Endothelial cell of umbilical vein (primary cell): ENCODE measurements at regions of chr19 and their contacts with region 1.

Region 1: GRCh38 chr19:41449079-41449864 is 6.3 kb downstream of the ERICH4 start:
- DNase-seq: peak; percentile 84
- H3K4me3 ChIP-seq: peak overlapping the region in 2 of 3 experiments; percentile 10 to 30
- H3K27ac ChIP-seq: no peak overlapping the region
- H3K4me1 ChIP-seq: no peaks in the 10 kb centered on the region
- H3K27me3 ChIP-seq: peaks cover 7% of the 10 kb centered on the region in 2 experiments
- CTCF ChIP-seq: peak; percentile 85 to 95
- POLR2A ChIP-seq: no peak

Region 2: GRCh38 chr19:41321600-41322270 is 127.5 kb before region 1 on chr19:
- CTCF ChIA-PET with region 1: no interaction called
- POLR2A ChIA-PET with region 1: no interaction called
- dilution Hi-C with region 1: no loop called
- intact Hi-C with region 1: no loop called
- DNase-seq: peak; percentile 76
- H3K4me3 ChIP-seq: no peak overlapping the region
- H3K27ac ChIP-seq: peak overlapping the region; percentile 100
- H3K4me1 ChIP-seq: peaks cover 46% of the 10 kb centered on the region
- H3K27me3 ChIP-seq: no peaks in the 10 kb centered on the region
- CTCF ChIP-seq: peak; percentile 83 to 89
- POLR2A ChIP-seq: peak; percentile 38

Region 3: DNA sequence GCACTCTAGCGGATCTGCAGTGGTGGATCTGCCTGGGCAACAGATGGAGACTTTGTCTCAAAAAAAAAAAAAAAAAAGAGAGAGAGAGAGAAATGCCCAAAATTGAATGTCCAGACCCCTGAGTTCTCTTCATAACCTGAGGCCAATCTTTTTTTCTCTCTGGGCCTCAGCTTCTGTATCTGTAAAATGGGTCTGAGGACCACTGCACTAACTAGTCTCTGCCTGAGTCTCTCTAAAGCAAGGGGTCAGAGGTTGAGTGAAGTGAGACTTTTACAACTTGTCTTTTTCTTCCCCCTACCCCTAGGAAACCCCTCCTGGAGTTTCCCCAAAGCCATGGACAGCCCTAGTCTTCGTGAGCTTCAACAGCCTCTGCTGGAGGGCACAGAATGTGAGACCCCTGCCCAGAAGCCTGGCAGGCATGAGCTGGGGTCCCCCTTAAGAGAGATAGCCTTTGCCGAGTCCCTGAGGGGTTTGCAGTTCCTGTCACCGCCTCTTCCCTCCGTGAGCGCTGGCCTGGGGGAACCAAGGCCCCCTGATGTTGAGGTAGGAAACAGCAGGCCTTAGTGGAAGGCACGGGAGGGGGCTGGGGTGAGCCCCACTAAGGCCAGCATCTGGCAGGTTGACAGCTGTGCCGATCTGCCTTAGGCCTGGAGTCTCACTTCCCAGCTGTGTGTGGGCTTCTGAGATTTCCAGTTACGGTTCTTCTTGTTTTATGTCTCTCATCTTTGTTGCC is 71.1 kb before region 1 on chr19:
- CTCF ChIA-PET with region 1: no interaction called
- POLR2A ChIA-PET with region 1: no interaction called
- dilution Hi-C with region 1: no loop called
- intact Hi-C with region 1: no loop called
- DNase-seq: no peak
- H3K4me3 ChIP-seq: no peak overlapping the region
- H3K27ac ChIP-seq: no peak overlapping the region
- H3K4me1 ChIP-seq: peaks cover 8% of the 10 kb centered on the region
- H3K27me3 ChIP-seq: no peaks in the 10 kb centered on the region
- CTCF ChIP-seq: peak in 1 of 2 donors; percentile 2
- POLR2A ChIP-seq: no peak

Region 4: DNA sequence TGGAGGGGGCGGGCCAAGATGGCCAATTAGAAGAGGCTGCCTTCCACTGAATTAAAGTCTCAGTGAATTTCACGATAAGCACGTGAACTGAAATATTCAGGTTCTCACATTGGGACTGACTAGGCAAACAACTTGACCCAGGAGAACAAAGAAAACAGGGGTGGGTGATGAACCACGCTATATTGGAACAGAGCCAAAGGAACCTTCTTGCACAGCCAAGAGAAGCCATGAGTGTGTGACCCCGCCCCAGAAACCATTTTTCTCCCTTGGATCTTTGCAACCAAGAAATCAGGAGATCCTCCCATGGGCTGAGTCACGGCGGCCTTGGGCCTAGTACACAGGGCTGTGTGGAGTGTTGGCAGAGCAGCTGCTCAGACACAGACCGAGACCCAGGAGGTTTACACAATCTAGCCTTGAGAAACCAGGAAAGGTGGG is 30.5 kb after region 1 on chr19:
- CTCF ChIA-PET with region 1: interaction called, 42 read pairs
- POLR2A ChIA-PET with region 1: interaction called, 4 read pairs
- dilution Hi-C with region 1: no loop called
- intact Hi-C with region 1: loop called (anchors 1 kb)
- DNase-seq: peak; percentile 98
- H3K4me3 ChIP-seq: peak overlapping the region in 2 of 3 experiments; percentile 56 to 98
- H3K27ac ChIP-seq: peak overlapping the region; percentile 97
- H3K4me1 ChIP-seq: peaks cover 37% of the 10 kb centered on the region
- H3K27me3 ChIP-seq: peaks cover under 1 to 3% of the 10 kb centered on the region in 2 experiments
- CTCF ChIP-seq: no peak
- POLR2A ChIP-seq: peak; percentile 96

Region 5: DNA sequence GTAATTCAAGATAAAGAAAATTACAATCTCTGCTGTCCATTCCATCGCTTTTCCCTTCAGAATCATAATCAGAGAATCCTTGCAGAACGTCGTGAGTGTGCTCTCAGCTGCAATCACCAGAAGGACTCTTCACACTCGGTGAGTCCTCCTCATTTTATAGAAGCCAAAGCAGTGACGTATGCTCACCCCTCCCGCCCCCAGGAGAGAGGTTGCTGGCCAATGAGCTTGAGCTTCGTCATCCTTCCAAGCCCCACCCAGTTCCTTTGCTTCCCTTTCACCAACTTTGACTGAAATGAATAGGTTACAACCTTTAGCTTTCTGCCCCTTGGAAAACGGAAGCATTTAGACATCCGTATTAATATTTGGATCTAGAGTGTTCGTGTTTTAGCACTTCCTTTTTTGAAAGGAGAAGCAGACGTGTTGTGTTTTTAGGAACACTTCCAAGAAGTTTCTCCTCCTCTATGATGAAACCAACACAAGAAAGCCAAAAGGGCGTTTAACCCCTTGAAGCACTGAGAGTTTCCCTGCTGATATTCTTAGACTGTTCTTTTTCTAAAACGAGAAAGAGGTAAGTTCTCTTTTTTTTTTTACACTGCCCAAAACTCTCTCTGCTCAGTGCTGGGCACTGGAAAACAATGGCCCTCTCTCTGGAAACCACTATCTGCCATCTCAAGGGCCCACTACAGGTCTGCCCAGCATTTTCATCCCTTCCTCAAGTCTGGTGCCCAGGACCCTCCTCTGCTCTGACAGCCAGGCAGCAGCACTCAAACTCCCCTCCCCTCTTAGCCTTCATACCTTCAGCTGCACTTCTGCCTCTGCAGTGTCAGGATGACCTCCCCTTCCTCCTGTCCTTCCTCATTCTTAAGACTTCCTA is 82.4 kb after region 1 on chr19:
- CTCF ChIA-PET with region 1: interaction called, 140 read pairs
- POLR2A ChIA-PET with region 1: interaction called, 8 read pairs
- dilution Hi-C with region 1: no loop called
- intact Hi-C with region 1: no loop called
- DNase-seq: peak; percentile 98
- H3K4me3 ChIP-seq: no peak overlapping the region
- H3K27ac ChIP-seq: peak overlapping the region; percentile 85
- H3K4me1 ChIP-seq: peaks cover 31% of the 10 kb centered on the region
- H3K27me3 ChIP-seq: peaks cover 17 to 24% of the 10 kb centered on the region in 2 experiments
- CTCF ChIP-seq: no peak
- POLR2A ChIP-seq: peak; percentile 85

Region 6: DNA sequence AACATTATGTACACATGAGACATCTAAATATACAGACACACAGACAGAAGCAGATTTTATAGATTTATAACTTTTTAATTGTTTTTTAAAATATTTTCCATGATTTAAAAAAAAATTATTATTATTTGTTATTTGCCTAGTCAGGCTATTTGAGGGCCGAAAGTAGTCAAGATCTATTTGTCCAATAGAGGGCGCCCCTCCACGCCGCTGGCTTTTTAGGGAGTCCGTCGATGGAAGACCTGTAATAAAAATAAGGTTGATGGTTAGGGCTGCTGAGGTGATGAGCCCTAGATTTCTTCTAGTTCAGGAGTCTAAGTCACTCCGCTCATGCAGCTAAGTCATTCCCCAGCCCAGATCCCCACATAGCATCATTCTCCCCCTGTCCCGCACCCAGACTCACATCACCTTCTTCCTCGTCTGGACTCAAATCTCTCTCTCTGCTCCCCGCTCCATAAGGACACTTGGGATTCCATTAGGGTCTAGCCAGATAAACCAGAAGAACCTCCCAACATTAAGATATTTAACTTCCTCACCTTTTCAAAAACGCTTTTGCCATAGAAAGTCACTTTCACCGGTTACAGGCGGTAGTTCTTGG is 92.8 kb after region 1 on chr19:
- CTCF ChIA-PET with region 1: interaction called, 140 read pairs
- POLR2A ChIA-PET with region 1: no interaction called
- dilution Hi-C with region 1: no loop called
- intact Hi-C with region 1: loop called (anchors 1 kb)
- DNase-seq: peak; percentile 67
- H3K4me3 ChIP-seq: no peak overlapping the region
- H3K27ac ChIP-seq: no peak overlapping the region
- H3K4me1 ChIP-seq: peaks cover 10% of the 10 kb centered on the region
- H3K27me3 ChIP-seq: peaks cover 4 to 14% of the 10 kb centered on the region in 2 experiments
- CTCF ChIP-seq: peak; percentile 70 to 73
- POLR2A ChIP-seq: no peak

Region 7: GRCh38 chr19:41548954-41549688 is 99.8 kb after region 1 on chr19:
- CTCF ChIA-PET with region 1: interaction called, 23 read pairs
- POLR2A ChIA-PET with region 1: no interaction called
- dilution Hi-C with region 1: no loop called
- intact Hi-C with region 1: no loop called
- DNase-seq: peak; percentile 89
- H3K4me3 ChIP-seq: peak overlapping the region in 2 of 3 experiments; percentile 29 to 66
- H3K27ac ChIP-seq: peak overlapping the region; percentile 92
- H3K4me1 ChIP-seq: peaks cover 38% of the 10 kb centered on the region
- H3K27me3 ChIP-seq: no peaks in the 10 kb centered on the region
- CTCF ChIP-seq: no peak
- POLR2A ChIP-seq: peak; percentile 86

Region 8: GRCh38 chr19:41554907-41555306 is 105.6 kb after region 1 on chr19:
- CTCF ChIA-PET with region 1: interaction called, 343 read pairs
- POLR2A ChIA-PET with region 1: no interaction called
- dilution Hi-C with region 1: no loop called
- intact Hi-C with region 1: no loop called
- DNase-seq: peak; percentile 54
- H3K4me3 ChIP-seq: no peak overlapping the region
- H3K27ac ChIP-seq: no peak overlapping the region
- H3K4me1 ChIP-seq: peaks cover 13% of the 10 kb centered on the region
- H3K27me3 ChIP-seq: peaks cover 10 to 11% of the 10 kb centered on the region in 2 experiments
- CTCF ChIP-seq: no peak
- POLR2A ChIP-seq: no peak

Region 9: GRCh38 chr19:41597600-41598041 is 148.3 kb after region 1 on chr19:
- CTCF ChIA-PET with region 1: interaction called, 9 read pairs
- POLR2A ChIA-PET with region 1: no interaction called
- dilution Hi-C with region 1: no loop called
- intact Hi-C with region 1: loop called (anchors 1 kb)
- DNase-seq: peak; percentile 70
- H3K4me3 ChIP-seq: no peak overlapping the region
- H3K27ac ChIP-seq: no peak overlapping the region
- H3K4me1 ChIP-seq: peaks cover 5% of the 10 kb centered on the region
- H3K27me3 ChIP-seq: peaks cover 8 to 18% of the 10 kb centered on the region in 2 experiments
- CTCF ChIP-seq: peak; percentile 85 to 89
- POLR2A ChIP-seq: no peak